ENCODE measurements at regions of chr2 and their contacts with region 1.

Region 1: GRCh38 chr2:20446917-20447436 is at the start of gene RHOB:
- DNase-seq: peak; percentile 99
- total RNA-seq, gene RHOB: 74.0 and 79.5 TPM in 2 replicates

Region 2: DNA sequence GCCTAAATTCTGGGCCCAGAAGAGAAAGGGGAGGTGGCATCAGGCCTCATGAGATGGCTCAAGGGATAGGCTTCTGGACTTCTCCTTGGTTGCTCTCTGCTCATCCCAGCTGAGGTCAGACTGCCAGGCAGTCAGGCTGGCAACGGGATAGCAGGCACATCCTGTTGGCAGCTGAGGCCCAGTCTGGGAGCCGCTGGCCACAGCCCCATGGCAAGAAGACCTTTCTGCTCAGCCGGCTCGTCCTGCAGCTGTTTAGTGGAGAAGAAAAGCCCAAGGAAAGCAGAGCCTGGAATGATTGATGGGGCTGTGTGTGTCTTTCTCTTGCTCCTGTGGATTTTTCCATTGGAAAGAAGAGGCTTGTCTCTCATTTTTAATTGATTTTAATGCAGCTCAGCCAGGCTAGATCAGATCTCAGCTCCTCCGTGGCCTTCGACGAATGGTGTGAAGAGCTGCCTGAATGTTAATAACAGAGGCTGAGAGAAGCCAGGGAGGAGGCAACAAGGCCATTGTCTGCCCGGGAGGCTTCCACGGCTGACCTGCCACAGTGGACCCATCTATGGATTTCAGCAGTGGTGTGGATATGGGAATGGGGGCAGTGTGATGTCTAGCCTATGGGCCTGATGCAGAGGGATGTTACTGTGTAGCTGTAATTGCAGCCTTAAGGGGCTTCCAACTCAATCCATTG is 104.4 kb after region 1 on chr2:
- in situ Hi-C with region 1: no loop called
- DNase-seq: no peak

Region 3: GRCh38 chr2:20635675-20636584 is 189.0 kb after region 1 on chr2:
- in situ Hi-C with region 1: loop called (anchors 10 kb)
- DNase-seq: peak; percentile 80

Region 4: DNA sequence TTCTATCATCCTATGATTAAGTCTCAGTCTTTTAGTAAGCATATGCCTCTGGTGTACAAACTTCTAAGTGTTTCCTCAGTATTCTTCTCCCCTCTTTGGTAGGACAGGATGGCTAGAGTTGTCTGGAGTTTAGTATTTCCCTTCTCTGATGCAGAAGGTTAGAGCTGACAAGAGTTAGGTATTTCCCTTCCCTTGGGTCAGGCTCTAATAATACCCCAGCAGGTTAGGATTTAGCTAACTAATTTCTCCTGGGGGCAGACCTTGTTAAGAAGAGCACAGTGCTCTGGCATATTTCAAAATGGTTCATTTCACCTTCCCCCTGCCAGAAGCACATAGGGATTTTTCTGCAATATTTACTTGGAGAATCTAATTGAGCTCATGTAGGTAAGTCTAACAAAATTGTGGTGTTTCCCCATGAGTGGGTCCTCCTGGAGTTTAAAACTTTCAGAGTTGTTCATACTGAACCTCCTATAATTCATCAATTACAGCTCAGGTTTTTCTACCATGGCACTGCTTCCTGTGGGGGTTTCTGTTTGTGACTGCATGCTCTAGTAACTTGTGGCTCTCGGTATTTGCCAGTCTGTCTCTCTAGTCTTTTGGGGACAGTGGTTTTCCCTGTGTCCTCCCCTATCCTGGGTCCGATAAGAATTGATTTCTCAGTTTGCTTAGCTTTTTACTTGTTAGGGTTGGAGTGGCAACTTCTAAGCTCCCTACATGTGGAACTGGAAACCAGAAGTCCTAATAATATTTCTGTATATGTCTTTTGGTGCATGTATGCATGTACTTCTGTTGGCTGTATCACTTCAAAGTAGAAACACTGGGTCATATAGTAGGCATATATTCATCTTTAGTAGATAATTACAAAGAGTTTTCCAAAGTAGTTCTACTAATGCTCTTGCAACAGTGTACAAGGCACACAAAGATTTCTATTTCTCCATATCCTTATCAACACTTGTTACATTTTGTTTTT is 297.7 kb after region 1 on chr2:
- in situ Hi-C with region 1: no loop called
- DNase-seq: no peak

Measured in SK-MEL-5 (cell line).